ENCODE measurements at regions of chr2 and their contacts with region 1.

Region 1: GRCh38 chr2:113080134-113080533 is 12.4 kb downstream of the IL1F10 start:
- DNase-seq: peak; percentile 67
- ATAC-seq: peak; percentile 81
- H3K4me3 Mint-ChIP-seq: no peak overlapping the region
- H3K27ac Mint-ChIP-seq: no peak overlapping the region
- H3K4me1 Mint-ChIP-seq: peaks cover 12% of the 10 kb centered on the region
- H3K27me3 Mint-ChIP-seq: no peaks in the 10 kb centered on the region
- CTCF ChIP-seq: peak; percentile 87

Region 2: GRCh38 chr2:112601751-112602150 is 478.4 kb before region 1 on chr2:
- CTCF ChIA-PET with region 1: no interaction called
- POLR2A ChIA-PET with region 1: no interaction called
- intact Hi-C with region 1: no loop called
- DNase-seq: no peak
- ATAC-seq: no peak
- H3K4me3 Mint-ChIP-seq: no peak overlapping the region
- H3K27ac Mint-ChIP-seq: no peak overlapping the region
- H3K4me1 Mint-ChIP-seq: peaks cover 5% of the 10 kb centered on the region
- H3K27me3 Mint-ChIP-seq: no peaks in the 10 kb centered on the region
- CTCF ChIP-seq: no peak

Region 3: GRCh38 chr2:112692496-112692911 is 387.6 kb before region 1 on chr2:
- CTCF ChIA-PET with region 1: no interaction called
- POLR2A ChIA-PET with region 1: no interaction called
- intact Hi-C with region 1: no loop called
- DNase-seq: peak; percentile 83
- ATAC-seq: peak; percentile 91
- H3K4me3 Mint-ChIP-seq: no peak overlapping the region
- H3K27ac Mint-ChIP-seq: peak overlapping the region; percentile 59
- H3K4me1 Mint-ChIP-seq: peaks cover 29% of the 10 kb centered on the region
- H3K27me3 Mint-ChIP-seq: no peaks in the 10 kb centered on the region
- CTCF ChIP-seq: no peak

Region 4: DNA sequence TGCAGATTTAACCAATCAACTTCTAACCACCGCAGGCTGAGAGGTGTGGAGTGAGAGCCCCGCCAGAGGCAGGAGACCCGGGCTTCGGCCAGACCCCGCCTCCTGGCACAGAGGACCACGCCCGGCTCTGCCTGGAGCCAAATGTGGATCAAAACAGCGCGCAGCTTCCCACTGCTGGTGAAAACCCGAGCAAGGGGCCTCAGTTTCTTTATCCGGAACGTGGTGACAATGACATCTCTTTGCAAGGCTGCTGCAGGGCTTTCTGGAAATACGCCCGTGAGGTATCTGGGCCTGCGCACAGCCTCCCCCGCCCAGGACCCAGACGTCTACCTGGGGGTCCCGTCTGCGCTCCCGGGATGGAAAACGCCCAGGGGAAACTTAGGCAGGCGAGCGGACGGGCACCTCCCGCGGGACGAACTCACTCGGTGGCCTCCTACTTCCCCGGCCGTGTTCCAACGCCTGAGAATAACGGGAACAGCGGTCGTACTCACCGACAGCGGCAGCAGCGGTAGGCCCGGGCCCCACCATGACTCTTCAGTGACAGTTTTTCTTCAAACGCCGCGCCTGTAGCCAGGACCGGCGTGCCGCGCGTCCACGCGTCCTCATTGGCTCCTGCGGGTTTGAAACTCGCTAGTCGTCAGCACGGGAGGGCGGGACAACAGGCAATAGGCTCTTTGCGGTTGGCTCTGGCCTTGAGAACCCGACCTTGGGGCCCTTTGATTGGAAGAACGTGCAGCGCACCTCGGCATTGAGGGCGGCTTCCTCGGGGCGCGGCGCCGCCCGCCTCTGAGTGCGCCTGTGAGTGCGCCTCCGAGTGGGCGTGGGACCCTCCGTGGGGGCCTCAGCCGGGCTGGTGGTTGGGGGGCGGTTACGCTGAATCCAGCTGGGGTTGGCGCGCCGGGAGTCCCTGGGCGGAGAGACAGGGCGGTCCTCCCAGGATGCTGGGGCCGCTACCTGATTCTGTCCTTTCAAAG is 315.8 kb before region 1 on chr2 and contains the start of gene CKAP2L:
- CTCF ChIA-PET with region 1: no interaction called
- POLR2A ChIA-PET with region 1: no interaction called
- intact Hi-C with region 1: no loop called
- DNase-seq: peak; percentile 99
- ATAC-seq: peak; percentile 98
- H3K4me3 Mint-ChIP-seq: peak within 1 kb of the TSS; percentile 97
- H3K27ac Mint-ChIP-seq: peak within 1 kb of the TSS; percentile 95
- H3K4me1 Mint-ChIP-seq: peaks cover 19% of the 10 kb centered on the region
- H3K27me3 Mint-ChIP-seq: no peaks in the 10 kb centered on the region
- CTCF ChIP-seq: no peak
- total RNA-seq, gene CKAP2L: 24.5 to 30.5 TPM

Region 5: DNA sequence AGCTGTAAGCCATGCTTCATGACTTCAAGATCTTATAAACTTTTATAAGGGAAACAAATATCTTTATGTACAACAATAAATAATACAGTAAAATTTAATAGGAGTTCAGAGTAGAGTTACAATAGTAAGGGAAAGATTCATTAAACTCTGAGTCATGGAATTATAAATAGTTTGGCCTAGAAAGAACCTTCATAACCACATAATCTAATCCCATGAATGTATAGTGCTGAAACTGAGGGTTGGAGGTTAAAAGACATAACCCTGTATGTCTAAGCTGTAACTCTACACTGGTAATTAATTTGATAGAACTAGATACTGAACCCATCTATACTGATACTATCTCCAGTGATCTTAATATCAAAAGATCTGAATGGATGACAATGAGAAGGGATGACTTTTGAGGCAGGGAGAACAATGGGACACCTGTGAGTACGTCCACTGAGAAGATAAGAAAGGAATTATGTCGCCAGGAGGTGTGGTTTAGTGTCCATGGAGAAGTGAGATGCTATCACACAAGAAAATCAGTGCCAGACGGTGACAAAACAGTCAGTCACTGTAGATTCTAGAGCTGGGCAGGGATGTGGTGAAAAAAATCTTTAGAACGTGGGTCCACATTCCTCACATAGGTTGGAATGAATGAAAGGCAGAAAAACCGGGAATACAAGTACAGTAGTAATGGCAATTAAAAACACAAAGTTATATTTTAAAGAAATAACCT is 11.3 kb before region 1 on chr2:
- CTCF ChIA-PET with region 1: interaction called, 10 read pairs
- POLR2A ChIA-PET with region 1: no interaction called
- intact Hi-C with region 1: no loop called
- DNase-seq: no peak
- ATAC-seq: no peak
- H3K4me3 Mint-ChIP-seq: no peak overlapping the region
- H3K27ac Mint-ChIP-seq: no peak overlapping the region
- H3K4me1 Mint-ChIP-seq: no peaks in the 10 kb centered on the region
- H3K27me3 Mint-ChIP-seq: no peaks in the 10 kb centered on the region
- CTCF ChIP-seq: no peak

Region 6: DNA sequence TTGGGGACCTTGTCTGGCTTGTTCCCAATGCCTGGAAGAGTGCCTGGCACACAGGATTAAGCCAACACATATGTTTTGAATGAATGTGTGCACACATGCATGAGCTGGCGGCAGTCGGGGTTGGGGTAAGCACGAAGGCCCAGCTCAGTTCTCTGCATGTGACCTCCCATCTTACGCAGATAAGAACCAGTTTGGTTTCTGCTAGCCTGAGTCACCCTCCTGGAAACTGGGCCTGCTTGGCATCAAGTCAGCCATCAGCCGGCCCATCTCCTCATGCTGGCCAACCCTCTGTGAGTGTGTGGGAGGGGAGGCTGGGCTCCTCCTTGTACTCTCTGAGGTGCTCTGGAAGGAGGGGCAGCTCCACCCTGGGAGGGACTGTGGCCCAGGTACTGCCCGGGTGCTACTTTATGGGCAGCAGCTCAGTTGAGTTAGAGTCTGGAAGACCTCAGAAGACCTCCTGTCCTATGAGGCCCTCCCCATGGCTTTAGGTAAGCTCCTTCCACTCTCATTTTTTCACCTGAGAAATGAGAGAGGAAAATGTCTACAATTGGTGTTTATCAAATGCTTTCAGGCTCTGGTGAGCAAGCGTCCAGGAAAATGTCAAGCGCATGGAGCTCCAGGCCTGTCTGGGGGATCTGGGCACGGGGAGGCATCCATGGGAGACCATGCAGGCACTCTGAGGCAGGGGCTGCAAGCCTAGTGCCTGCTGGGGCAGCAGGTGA is 37.6 kb after region 1 on chr2:
- CTCF ChIA-PET with region 1: interaction called, 18 read pairs
- POLR2A ChIA-PET with region 1: no interaction called
- intact Hi-C with region 1: no loop called
- DNase-seq: peak; percentile 80
- ATAC-seq: peak; percentile 93
- H3K4me3 Mint-ChIP-seq: no peak overlapping the region
- H3K27ac Mint-ChIP-seq: peak overlapping the region; percentile 44
- H3K4me1 Mint-ChIP-seq: peaks cover 20% of the 10 kb centered on the region
- H3K27me3 Mint-ChIP-seq: peaks cover 5% of the 10 kb centered on the region
- CTCF ChIP-seq: no peak

Region 7: GRCh38 chr2:113129519-113130078 is 49.5 kb after region 1 on chr2:
- CTCF ChIA-PET with region 1: interaction called, 190 read pairs
- POLR2A ChIA-PET with region 1: no interaction called
- intact Hi-C with region 1: no loop called
- DNase-seq: no peak
- ATAC-seq: no peak
- H3K4me3 Mint-ChIP-seq: no peak overlapping the region
- H3K27ac Mint-ChIP-seq: no peak overlapping the region
- H3K4me1 Mint-ChIP-seq: peaks cover 23% of the 10 kb centered on the region
- H3K27me3 Mint-ChIP-seq: peaks cover 1% of the 10 kb centered on the region
- CTCF ChIP-seq: no peak

Region 8: GRCh38 chr2:113181258-113182051 is 101.3 kb after region 1 on chr2:
- CTCF ChIA-PET with region 1: interaction called, 19 read pairs
- POLR2A ChIA-PET with region 1: interaction called, 3 read pairs
- intact Hi-C with region 1: no loop called
- DNase-seq: no peak
- ATAC-seq: peak; percentile 10
- H3K4me3 Mint-ChIP-seq: peak overlapping the region; percentile 84
- H3K27ac Mint-ChIP-seq: peak overlapping the region; percentile 79
- H3K4me1 Mint-ChIP-seq: peaks cover 90% of the 10 kb centered on the region
- H3K27me3 Mint-ChIP-seq: no peaks in the 10 kb centered on the region
- CTCF ChIP-seq: no peak

Region 9: DNA sequence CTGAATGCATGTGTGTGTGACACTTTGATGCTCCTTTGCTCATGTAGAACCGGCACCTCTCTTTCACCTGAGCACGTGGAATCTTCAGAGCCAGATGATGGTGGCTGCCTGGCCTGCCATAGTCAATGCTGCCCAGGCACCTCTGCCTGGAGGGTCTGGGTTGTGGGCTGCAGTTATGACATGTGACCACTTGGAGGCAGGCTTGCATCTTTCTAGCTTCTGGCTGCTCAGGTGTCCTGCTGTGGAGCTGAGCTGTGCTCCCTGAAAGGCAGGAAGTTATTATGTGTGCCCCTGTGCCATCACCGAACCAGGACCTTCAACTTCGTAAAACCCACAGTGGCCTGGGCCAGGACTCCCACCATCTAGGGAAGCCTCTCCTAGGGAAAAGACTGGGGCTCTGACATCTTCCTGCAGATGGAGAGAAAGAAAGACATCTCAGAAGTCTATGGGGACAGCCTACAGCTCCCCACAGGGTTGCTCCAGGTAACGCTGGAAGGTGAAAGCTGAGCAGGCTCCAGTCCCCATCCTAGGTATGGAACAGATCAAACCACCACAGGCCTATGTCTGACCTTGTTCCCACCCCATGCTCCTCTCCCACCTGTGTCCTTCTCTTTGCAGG is 123.9 kb after region 1 on chr2:
- CTCF ChIA-PET with region 1: interaction called, 26 read pairs
- POLR2A ChIA-PET with region 1: interaction called, 3 read pairs
- intact Hi-C with region 1: no loop called
- DNase-seq: peak; percentile 85
- ATAC-seq: peak; percentile 86
- H3K4me3 Mint-ChIP-seq: no peak overlapping the region
- H3K27ac Mint-ChIP-seq: peak overlapping the region; percentile 77
- H3K4me1 Mint-ChIP-seq: peaks cover 16% of the 10 kb centered on the region
- H3K27me3 Mint-ChIP-seq: no peaks in the 10 kb centered on the region
- CTCF ChIP-seq: peak; percentile 78